Kidney (tissue), 22 donors: ENCODE measurements at regions of chr5 and their contacts with region 1.

Region 1: DNA sequence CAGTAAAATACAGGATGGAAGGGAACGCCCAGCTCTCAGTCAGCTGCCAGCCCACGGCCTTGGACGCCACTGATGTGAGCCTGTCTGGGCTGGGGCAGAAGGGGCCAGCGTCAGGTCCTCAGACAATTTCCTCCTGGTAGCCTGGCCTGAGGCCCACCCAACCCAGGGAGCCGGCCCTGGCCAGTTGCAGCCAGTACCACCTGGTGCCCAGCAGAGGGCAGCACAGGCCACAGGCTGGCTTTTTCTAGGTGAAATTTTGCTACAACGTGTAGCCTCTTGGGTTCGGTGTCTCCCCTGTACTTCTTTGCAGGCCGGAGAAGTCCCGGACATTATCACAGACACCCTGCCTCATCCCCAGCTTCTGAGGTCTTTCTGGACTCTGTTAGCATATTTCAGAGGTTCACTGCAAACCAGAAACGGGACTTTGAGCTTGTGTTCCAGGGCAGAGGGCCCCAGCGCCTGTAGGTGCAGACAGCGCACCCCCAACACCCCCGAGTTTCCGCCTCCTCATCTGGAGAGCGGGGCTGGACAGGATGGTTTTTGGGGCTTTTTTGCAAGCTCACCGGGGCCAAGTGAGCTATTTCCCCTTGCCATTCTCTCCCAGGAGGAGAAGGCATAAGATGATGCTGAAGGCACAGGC is 45.9 kb upstream of the KCNMB1 start:
- DNase-seq: peak; percentile 68 to 88 (median 80)
- H3K4me3 ChIP-seq: no peak overlapping the region
- H3K27ac ChIP-seq: no peak overlapping the region
- H3K4me1 ChIP-seq: peaks cover 0 to 4% (median 0%) of the 10 kb centered on the region in 3 donors
- H3K27me3 ChIP-seq: no peaks in the 10 kb centered on the region
- CTCF ChIP-seq: peak; percentile 95

Region 2: GRCh38 chr5:170235876-170236864 is 198.9 kb before region 1 on chr5:
- intact Hi-C with region 1: no loop called
- DNase-seq: no peak
- H3K4me3 ChIP-seq: no peak overlapping the region
- H3K27ac ChIP-seq: no peak overlapping the region
- H3K4me1 ChIP-seq: no peaks in the 10 kb centered on the region
- H3K27me3 ChIP-seq: no peaks in the 10 kb centered on the region
- CTCF ChIP-seq: no peak

Region 3: GRCh38 chr5:170368586-170368985 is 66.5 kb before region 1 on chr5:
- intact Hi-C with region 1: no loop called
- DNase-seq: no peak
- H3K4me3 ChIP-seq: no peak overlapping the region
- H3K27ac ChIP-seq: no peak overlapping the region
- H3K4me1 ChIP-seq: no peaks in the 10 kb centered on the region
- H3K27me3 ChIP-seq: no peaks in the 10 kb centered on the region
- CTCF ChIP-seq: no peak

Region 4: DNA sequence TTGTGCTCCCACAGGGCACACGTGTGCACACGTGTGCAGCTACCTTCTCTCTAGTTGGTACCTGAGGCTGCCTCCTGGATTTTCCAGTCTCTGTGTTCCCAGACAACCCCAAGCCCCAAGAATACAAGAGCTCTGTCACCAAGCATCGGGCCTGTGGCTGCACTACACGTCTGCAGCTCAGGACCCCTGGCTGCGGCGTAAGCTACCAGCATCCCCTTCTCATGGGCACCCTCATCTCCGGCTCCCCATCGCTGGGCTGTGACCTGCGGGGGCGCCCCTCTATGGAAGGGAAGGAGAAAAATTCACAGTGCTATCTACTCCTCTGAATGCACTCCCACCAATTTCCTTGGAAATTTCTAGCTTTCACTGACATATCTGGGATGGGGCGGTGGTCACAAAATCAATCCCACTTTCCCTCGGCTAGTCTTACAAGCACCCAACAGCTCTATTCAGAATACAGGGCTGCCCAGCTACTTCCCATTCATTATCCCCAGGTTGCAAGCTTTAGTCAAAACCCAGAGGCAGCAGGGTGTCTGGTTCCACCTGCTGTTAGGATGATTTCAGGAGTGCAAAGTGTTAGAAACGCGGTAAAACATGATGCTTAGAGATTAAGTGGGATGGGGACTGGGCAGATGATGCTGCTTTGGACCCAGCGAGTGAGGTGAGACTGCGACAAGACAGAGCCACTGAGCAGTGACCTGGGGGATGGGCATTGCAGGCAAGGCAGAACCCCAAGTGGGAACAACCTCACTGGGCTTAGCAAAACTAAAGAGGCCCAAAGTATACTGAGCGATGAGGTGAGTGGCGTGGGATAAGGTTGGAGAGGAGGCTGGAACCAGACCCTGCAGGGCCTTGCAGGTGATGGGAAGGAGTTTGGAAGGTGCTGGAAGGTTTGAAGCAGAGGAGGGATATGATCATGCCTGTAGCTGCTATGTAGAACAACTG is 190.4 kb after region 1 on chr5:
- intact Hi-C with region 1: loop called (anchors 5 kb)
- DNase-seq: no peak
- H3K4me3 ChIP-seq: no peak overlapping the region
- H3K27ac ChIP-seq: no peak overlapping the region
- H3K4me1 ChIP-seq: no peaks in the 10 kb centered on the region
- H3K27me3 ChIP-seq: no peaks in the 10 kb centered on the region
- CTCF ChIP-seq: no peak